GM13976 (cell line): ENCODE measurements at regions of chr2 and their contacts with region 1.

Region 1: DNA sequence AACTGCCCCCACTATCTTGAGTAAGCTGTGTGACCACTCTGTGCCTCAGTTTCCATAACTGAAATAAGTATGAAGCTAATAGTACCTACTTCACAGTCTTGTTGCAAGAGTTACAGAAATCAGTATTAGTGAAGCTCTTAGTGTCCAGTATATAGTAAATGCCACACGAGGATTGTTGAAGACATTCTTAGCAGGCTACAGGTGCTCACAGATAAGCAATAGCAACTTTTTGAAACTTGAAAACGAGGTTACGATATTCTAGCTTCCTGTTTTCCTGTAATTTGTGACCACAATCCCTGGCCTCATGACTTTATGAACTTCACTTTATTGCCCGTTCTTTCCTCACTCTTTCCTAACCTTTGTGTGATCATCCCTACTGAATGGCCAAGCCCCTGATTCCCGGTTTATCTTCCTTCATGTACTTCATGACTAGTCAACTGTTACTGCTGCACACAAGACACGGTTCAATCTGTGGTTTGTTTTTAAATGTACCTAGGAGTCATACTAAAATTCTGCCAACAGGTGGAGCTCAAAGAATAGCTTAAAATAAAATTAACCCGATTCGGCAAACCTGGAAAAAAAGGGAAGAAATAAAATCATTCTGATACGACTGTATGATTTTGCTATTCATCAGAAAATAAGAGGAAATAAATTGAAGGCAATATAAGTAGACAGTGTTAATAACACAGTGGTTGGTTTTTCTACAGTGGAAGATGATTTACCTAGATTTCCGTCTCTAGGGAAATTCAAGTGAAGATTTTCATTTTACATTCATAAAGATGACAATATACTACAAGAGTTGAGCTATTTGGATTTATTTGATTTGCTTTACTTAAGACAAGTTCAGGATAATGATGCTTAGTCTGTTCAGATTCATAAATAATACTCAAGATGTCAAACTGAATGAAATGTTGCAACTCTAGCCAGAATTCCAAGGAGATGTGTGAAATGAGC is 38.1 kb upstream of the STAT1 start:
- DNase-seq: peak; percentile 40
- CTCF ChIP-seq: peak; percentile 53

Region 2: DNA sequence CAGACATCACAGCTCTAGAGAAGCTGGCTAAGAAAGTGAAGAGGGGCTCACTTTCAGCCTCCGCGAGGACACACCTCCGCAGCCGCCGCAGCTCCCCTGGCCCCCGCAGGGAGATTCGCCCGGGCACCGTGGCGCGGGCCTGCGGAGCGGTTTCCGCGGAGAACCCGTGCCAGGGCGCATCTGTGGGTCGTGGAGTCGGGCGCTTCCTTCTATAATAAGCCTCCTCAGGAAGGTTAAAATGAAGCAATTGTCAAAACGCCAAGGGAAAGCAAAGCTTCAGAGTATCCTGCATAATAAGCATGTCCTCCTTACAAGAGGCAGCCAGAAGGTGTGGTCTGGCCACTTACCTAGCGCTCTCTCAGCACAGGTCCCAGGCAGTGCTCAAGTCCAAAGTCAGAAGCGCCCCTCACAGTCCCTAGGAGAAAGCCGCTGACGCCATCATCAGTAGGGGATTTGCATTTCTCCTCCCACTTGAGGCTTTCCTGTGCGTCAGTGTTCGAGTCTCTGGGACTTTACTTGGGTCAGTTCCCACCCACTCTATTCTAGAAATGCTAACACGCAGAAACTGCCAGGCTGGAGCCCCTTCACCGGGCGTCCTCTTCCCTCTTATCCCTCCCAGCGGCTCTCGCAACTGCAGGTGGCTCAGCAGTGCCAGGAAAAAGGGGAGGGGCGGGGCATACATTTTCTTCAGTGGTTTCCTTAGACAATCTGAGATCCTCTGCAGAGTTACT is 98.7 kb after region 1 on chr2 and contains the start of gene STAT4:
- in situ Hi-C with region 1: loop called (anchors 10 kb)
- DNase-seq: peak; percentile 77
- CTCF ChIP-seq: no peak

Region 3: GRCh38 chr2:191521608-191522208 is 469.6 kb after region 1 on chr2:
- in situ Hi-C with region 1: loop called (anchors 25 kb)
- DNase-seq: peak; percentile 33
- CTCF ChIP-seq: peak; percentile 59